Activated naive CD4-positive, alpha-beta T cell treated with anti-CD3 and anti-CD28 coated beads for 36 hours (primary cell): ENCODE measurements at regions of chr22 and their contacts with region 1.

Region 1: GRCh38 chr22:30132290-30132996 is 52.2 kb downstream of the HORMAD2 start:
- DNase-seq: no peak
- H3K4me3 Mint-ChIP-seq: no peak overlapping the region
- H3K27ac Mint-ChIP-seq: peak overlapping the region; percentile 73
- H3K4me1 Mint-ChIP-seq: peaks cover 19% of the 10 kb centered on the region
- H3K27me3 Mint-ChIP-seq: no peaks in the 10 kb centered on the region

Region 2: DNA sequence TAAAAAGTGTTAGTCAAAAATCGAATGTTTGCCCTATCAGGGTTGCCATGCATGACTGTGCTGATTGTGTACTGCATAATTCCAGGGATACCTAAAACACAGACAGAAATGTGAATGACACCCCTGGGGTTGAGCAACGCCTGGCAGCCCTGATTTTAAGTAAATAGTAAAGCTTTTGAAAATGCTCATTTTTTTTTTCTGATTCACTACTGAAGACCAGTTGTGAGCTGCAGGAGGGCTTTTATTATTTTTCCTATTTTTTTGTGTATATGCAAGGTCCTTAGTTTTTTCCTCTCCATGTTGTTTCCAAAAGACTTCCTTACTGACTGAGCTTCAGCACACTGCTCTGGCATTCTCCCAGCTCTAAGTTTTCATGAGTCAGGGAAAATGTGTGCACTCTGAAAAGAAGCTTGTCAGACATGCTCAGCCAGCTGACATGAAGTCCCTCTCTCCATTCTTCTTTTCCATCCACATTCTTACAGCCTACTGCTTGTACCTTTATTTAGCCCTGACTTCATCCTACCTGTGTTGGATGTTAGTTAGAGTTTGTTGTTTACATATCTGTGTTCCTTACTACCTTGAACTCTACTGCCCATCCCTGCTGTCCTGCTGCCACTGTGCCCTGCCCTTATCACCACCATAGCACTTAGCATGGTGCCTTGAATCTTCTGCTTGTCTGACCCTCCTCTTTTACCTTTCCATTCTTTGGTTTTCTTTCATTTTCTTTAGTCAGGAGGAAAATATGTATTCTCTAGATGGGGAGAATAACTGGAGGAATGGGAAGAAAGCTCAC is 27.3 kb after region 1 on chr22:
- CTCF ChIA-PET with region 1: interaction called, 3 read pairs
- intact Hi-C with region 1: loop called (anchors 2 kb)
- DNase-seq: no peak
- H3K4me3 Mint-ChIP-seq: no peak overlapping the region
- H3K27ac Mint-ChIP-seq: peak overlapping the region; percentile 93
- H3K4me1 Mint-ChIP-seq: peaks cover 63% of the 10 kb centered on the region
- H3K27me3 Mint-ChIP-seq: no peaks in the 10 kb centered on the region

Region 3: GRCh38 chr22:30235687-30236170 is 103.3 kb after region 1 on chr22:
- CTCF ChIA-PET with region 1: no interaction called
- intact Hi-C with region 1: no loop called
- DNase-seq: no peak
- H3K4me3 Mint-ChIP-seq: no peak overlapping the region
- H3K27ac Mint-ChIP-seq: no peak overlapping the region
- H3K4me1 Mint-ChIP-seq: peaks cover 5% of the 10 kb centered on the region
- H3K27me3 Mint-ChIP-seq: no peaks in the 10 kb centered on the region